Activated CD8-positive, alpha-beta memory T cell treated with anti-CD3 and anti-CD28 coated beads, Interleukin-2, amount 10 ng/mL, durations not matched to agents 7 days and 5 days (primary cell): ENCODE measurements at regions of chr20 and their contacts with region 1.

Region 1: GRCh38 chr20:5557123-5557522 is 193.1 kb upstream of the SHLD1 start:
- DNase-seq: peak; percentile 77
- ATAC-seq: peak; percentile 76
- H3K4me3 Mint-ChIP-seq: no peak overlapping the region
- H3K27ac Mint-ChIP-seq: peak overlapping the region; percentile 37
- H3K4me1 Mint-ChIP-seq: no peaks in the 10 kb centered on the region
- H3K27me3 Mint-ChIP-seq: no peaks in the 10 kb centered on the region

Region 2: DNA sequence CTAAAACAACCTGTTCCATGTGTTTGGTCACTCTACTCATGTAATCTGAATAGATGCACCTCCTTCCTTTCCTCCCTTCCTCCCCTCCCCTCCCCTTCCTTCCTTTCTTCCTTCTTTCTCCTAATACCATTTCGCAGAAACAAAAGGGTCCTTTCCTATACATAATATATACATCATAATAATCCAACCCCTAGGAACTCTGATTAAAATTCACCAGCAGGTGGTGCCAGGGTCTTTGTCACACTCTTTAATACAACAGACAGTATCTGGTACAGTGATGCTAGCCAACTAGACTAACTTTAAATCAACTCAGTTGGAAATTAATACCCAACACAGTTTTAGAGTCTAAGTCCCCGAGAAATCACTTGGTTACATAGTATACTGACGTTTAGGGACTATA is 11.9 kb after region 1 on chr20:
- CTCF ChIA-PET with region 1: interaction called, 28 read pairs
- DNase-seq: peak; percentile 62
- ATAC-seq: peak; percentile 82
- H3K4me3 Mint-ChIP-seq: no peak overlapping the region
- H3K27ac Mint-ChIP-seq: peak overlapping the region; percentile 36
- H3K4me1 Mint-ChIP-seq: peaks cover 19% of the 10 kb centered on the region
- H3K27me3 Mint-ChIP-seq: no peaks in the 10 kb centered on the region

Region 3: GRCh38 chr20:5580936-5581708 is 24.0 kb after region 1 on chr20:
- CTCF ChIA-PET with region 1: no interaction called
- DNase-seq: no peak
- ATAC-seq: no peak
- H3K4me3 Mint-ChIP-seq: no peak overlapping the region
- H3K27ac Mint-ChIP-seq: no peak overlapping the region
- H3K4me1 Mint-ChIP-seq: peaks cover 10% of the 10 kb centered on the region
- H3K27me3 Mint-ChIP-seq: no peaks in the 10 kb centered on the region

Region 4: DNA sequence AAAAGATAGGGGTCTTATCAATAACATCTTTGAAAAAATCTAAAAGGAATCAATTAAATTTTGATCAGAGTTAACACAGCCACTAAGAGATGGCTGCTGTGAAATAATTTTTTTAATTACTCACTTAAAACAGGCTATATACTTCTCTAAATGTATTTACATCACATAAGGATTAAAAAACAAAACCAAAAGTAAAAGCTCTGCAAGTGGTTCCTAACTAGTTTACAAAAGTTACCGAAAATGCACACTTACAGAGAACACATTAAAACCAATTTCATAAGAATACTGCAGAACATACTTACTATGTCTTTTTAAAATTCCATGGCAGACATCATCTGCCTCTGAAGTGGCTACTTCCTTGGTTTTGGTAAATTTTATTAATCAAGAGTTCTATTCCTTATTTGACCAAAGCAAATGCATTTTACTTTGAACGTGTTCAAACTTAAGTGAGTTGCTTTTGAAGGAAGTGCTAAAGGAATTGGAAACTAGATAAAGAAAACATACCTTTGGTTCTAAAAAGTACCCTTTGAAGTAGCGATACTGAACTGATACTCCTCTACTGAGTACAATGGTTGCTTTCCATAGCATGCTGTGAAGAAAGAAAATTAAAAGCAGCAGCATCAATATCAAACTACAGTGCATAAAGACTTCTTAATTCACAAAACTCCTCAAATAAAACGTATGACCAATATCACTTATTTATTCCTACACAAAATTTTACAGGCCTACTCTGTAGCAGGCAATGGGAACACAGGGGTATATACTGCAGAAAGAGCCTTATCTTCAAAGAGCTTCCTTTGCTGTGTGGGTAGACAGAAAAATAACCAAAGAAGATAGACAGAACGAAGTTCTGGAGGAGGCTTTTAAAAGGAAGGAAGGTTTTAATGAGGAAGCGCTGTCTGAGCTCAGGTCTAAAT is 36.0 kb after region 1 on chr20:
- CTCF ChIA-PET with region 1: interaction called, 10 read pairs
- DNase-seq: no peak
- ATAC-seq: peak; percentile 46
- H3K4me3 Mint-ChIP-seq: peak overlapping the region; percentile 66
- H3K27ac Mint-ChIP-seq: peak overlapping the region; percentile 92
- H3K4me1 Mint-ChIP-seq: peaks cover 67% of the 10 kb centered on the region
- H3K27me3 Mint-ChIP-seq: no peaks in the 10 kb centered on the region